OCI-LY7 (cell line): ENCODE measurements at regions of chr5 and their contacts with region 1.

Region 1: DNA sequence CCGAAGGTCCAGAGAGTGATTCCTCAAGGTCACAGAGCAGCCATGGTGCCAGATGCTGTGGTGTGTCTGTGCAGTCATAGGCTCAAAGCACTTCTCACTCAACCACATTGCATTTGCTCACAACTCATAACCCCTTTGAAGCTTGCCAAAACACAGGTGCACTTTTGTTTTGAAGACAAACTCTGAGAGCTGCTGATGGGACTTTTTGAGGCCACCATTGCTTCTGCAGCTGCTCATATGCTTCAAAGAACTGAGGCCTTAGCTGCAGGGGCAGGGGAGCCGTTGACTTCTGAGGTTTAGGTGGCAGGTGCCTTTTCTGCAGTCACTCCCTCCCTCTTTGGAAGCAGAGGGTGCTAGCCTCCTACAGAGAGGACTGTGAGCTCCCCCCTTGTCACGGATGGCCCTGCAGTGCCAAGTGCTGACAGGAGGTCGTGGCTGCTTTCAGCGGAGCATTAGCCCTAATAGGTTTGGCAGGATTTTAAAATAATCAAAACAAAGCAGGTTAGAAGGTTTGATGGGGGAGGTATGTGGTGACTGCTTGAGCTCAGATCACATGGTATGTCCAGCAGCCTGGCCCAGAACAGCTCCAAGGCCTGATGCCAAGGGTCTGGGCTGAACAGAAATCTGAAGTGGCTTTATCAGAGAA is 232.1 kb downstream of the MAN2A1 start:
- DNase-seq: peak; percentile 93
- H3K4me3 ChIP-seq: peak overlapping the region; percentile 7
- H3K27ac ChIP-seq: peak overlapping the region; percentile 92
- H3K4me1 ChIP-seq: peaks cover 34% of the 10 kb centered on the region
- CTCF ChIP-seq: peak; percentile 28; the same call in 1 of the 2 replicates

Region 2: GRCh38 chr5:108381954-108382783 is 1539.7 kb before region 1 on chr5 and contains the start of gene FBXL17:
- CTCF ChIA-PET with region 1: no interaction called
- POLR2A ChIA-PET with region 1: no interaction called
- intact Hi-C with region 1: loop called (anchors 1 kb)
- DNase-seq: peak; percentile 96
- H3K4me3 ChIP-seq: peak within 1 kb of the TSS; percentile 92
- H3K27ac ChIP-seq: peak within 1 kb of the TSS; percentile 92
- H3K4me1 ChIP-seq: peaks cover 28% of the 10 kb centered on the region
- CTCF ChIP-seq: no peak
- total RNA-seq, gene FBXL17: 10.2 TPM in 2 replicates

Region 3: GRCh38 chr5:109718216-109718615 is 203.6 kb before region 1 on chr5:
- CTCF ChIA-PET with region 1: no interaction called
- POLR2A ChIA-PET with region 1: no interaction called
- intact Hi-C with region 1: no loop called
- DNase-seq: no peak
- H3K4me3 ChIP-seq: no peak overlapping the region
- H3K27ac ChIP-seq: no peak overlapping the region
- H3K4me1 ChIP-seq: no peaks in the 10 kb centered on the region
- CTCF ChIP-seq: no peak

Region 4: GRCh38 chr5:110054240-110054639 is 132.4 kb after region 1 on chr5:
- CTCF ChIA-PET with region 1: no interaction called
- POLR2A ChIA-PET with region 1: interaction called, 5 read pairs
- intact Hi-C with region 1: loop called (anchors 1 kb)
- DNase-seq: peak; percentile 92
- H3K4me3 ChIP-seq: peak overlapping the region; percentile 42
- H3K27ac ChIP-seq: peak overlapping the region; percentile 65
- H3K4me1 ChIP-seq: peaks cover 25% of the 10 kb centered on the region
- CTCF ChIP-seq: peak; percentile 71